Colonic mucosa (tissue), 4 donors: ENCODE measurements at regions of chr16 and their contacts with region 1.

Region 1: DNA sequence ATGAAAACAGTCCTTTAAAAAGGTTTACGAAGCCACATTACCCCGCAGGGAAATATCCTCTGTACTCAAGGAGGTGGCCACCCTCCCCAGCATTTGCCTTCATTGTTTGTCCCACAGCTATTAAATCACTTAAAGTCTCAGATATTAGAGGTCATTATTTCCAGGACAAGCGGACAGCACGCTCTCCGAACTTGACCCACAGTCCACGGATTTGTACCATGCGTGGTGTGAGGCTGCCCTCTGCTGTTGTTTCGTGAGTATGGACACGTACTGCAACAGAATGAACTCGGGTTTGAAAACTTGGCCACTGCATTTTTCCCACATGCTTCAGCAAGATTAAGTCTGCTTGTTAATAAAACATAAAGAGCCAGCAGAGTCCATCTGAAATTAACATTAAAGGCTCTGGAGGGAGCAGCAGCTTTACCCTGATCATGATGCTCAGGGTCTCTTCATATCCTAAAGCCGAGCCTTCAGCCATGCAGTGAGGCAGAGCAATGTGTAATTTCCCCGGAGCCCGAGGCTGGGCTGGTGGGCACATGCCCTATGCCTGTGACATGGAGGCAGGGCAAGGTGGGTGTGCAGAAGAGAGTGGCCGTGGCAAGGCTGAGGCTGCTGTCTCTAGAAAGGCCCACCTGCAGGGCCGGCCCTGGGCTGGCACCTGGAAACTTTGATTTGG is 19.7 kb downstream of the MEAK7 start:
- DNase-seq: peak; percentile 70
- H3K4me3 ChIP-seq: no peak overlapping the region
- H3K27ac ChIP-seq: no peak overlapping the region
- H3K4me1 ChIP-seq: no peaks in the 10 kb centered on the region
- H3K27me3 ChIP-seq: no peaks in the 10 kb centered on the region
- CTCF ChIP-seq: peak; percentile 74

Region 2: GRCh38 chr16:83967806-83968305 is 516.9 kb before region 1 on chr16 and contains the start of gene NECAB2:
- intact Hi-C with region 1: loop called (anchors 10 kb)
- DNase-seq: no peak
- H3K4me3 ChIP-seq: peak within 1 kb of the TSS; percentile 22
- H3K27ac ChIP-seq: no peak within 1 kb of the TSS
- H3K4me1 ChIP-seq: no peaks in the 10 kb centered on the region
- H3K27me3 ChIP-seq: peaks cover 13% of the 10 kb centered on the region
- CTCF ChIP-seq: peak; percentile 44
- total RNA-seq, gene NECAB2: 0.25 to 0.42 TPM

Region 3: GRCh38 chr16:84186685-84187437 is 297.9 kb before region 1 on chr16 and contains the start of gene TAF1C:
- intact Hi-C with region 1: loop called (anchors 10 kb)
- DNase-seq: peak; percentile 92
- H3K4me3 ChIP-seq: peak within 1 kb of the TSS; percentile 88
- H3K27ac ChIP-seq: peak within 1 kb of the TSS; percentile 49
- H3K4me1 ChIP-seq: no peaks in the 10 kb centered on the region
- H3K27me3 ChIP-seq: no peaks in the 10 kb centered on the region
- CTCF ChIP-seq: peak; percentile 94
- total RNA-seq, gene TAF1C: 17.2 to 45.6 TPM

Region 4: GRCh38 chr16:84277237-84277823 is 207.4 kb before region 1 on chr16:
- intact Hi-C with region 1: loop called (anchors 5 kb)
- DNase-seq: peak; percentile 80
- H3K4me3 ChIP-seq: no peak overlapping the region
- H3K27ac ChIP-seq: no peak overlapping the region
- H3K4me1 ChIP-seq: no peaks in the 10 kb centered on the region
- H3K27me3 ChIP-seq: no peaks in the 10 kb centered on the region
- CTCF ChIP-seq: peak; percentile 89